Posterior cingulate gyrus (tissue), 11 donors: ENCODE measurements at regions of chr1 and their contacts with region 1.

Region 1: GRCh38 chr1:56584910-56585528 is 5.7 kb upstream of the PLPP3 start:
- DNase-seq: peak in 1 of 10 donors; percentile 21

Region 2: GRCh38 chr1:55140546-55140983 is 1444.5 kb before region 1 on chr1:
- intact Hi-C with region 1: loop called (anchors 5 kb)
- DNase-seq: peak in 6 of 10 donors; percentile 37 to 87 (median 56)

Region 3: DNA sequence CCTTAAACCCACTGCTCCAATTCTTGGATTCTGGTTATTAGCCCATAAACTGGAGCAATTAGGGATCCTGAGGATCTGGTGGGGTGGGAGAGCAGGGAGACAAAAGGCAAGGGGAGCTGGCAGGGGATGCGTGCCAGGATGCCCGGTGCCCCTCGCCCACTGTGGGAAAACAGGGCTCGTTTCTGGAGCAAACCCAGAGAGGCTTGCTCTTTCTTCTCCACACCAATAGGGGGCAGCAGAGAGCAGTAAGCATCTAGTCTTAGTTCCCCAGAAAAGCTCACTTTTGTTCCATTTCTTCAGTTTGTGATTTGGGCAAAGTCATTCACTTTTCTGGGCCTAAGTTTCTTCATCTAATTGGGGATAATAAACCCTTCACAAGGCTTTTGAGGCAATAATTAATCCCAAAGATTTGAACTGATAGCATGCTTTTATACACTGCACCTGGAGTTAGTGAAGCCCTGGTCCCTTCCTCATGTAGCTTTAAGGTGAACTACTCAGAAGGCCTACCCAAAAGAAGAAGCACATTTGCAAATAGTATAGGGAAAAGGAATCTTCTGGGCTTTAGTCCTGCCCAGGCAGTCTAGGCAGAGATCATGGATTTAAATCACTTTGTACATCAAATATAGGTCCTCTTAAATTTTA is 1209.3 kb before region 1 on chr1:
- intact Hi-C with region 1: loop called (anchors 5 kb)
- DNase-seq: peak in 4 of 10 donors; percentile 47 to 85 (median 56)

Region 4: GRCh38 chr1:55670331-55671082 is 914.5 kb before region 1 on chr1:
- intact Hi-C with region 1: loop called (anchors 10 kb)
- DNase-seq: no peak

Region 5: GRCh38 chr1:56547953-56548352 is 37.1 kb before region 1 on chr1:
- intact Hi-C with region 1: no loop called
- DNase-seq: peak in 1 of 10 donors; percentile 33